ENCODE measurements at regions of chr1 and their contacts with region 1.

Region 1: DNA sequence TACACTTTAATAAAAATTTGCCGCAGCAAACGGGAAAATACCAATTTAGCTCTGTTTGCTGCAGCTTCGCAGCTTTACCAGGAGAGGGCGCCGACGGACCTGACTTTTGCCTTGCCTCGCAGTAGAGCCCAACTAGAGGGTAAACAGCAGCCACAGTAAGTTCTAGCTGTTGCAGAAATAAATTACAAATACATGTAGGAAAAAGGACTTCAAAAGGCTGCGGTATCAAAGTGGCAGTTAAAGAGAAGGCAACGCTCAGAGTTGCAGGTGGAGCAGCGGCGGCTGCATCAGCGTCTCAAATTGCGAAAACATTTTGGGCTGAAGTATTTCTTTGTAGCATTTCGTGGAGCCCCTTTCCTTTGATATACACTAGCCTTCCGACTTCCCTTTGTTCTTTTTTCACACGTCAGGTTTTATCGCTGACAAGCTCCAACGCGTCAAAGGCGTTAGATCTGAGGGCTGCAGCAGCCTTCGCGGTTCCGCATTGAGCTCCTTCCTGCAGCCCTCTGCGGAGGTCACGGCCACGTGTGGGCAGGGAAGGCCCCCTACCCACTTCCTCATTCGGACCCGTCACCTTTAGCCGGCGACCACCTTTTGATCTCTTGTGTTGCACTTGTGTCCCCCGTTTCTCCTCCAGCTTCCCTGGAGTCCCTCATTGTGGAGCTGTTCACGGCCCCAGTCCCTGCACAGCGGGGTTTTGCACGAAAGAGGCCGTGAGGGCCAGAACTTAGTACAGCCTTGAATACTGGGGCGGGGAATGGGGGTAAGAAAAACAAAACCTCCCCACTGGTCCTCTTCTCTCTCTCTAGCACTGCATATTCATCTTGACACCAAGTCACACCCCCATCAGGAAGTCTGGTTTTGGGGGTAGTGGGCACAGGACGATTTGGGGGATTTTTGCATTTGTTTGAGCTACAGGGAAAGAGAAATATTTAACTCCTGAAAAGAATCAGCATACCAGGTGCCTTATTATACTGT is 72.8 kb downstream of the S1PR1 start:
- DNase-seq: peak; percentile 80
- H3K4me3 Mint-ChIP-seq: peak overlapping the region; percentile 71
- H3K27ac Mint-ChIP-seq: peak overlapping the region; percentile 48
- H3K4me1 Mint-ChIP-seq: peaks cover 68% of the 10 kb centered on the region
- H3K27me3 Mint-ChIP-seq: no peaks in the 10 kb centered on the region

Region 2: DNA sequence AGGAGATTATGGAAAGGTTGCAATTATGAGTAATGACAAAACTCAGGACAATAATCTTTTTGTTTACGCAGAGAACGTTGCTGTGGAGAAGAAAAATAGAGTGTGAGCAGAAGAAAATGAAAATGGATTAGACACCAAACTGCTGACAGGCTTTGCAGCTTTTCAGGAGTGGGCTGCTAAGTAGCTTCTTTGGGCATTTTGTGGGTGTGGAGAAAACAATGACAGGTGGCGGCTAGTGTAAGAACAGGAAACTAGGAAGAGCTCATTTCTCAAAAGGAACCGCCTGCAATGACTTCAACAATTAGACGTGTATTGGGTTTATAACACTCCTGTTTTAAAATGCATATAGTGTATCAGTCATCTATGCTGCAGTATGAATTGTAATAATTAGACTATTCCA is 1682.0 kb before region 1 on chr1:
- CTCF ChIA-PET with region 1: no interaction called
- intact Hi-C with region 1: no loop called
- DNase-seq: no peak
- H3K4me3 Mint-ChIP-seq: no peak overlapping the region
- H3K27ac Mint-ChIP-seq: no peak overlapping the region
- H3K4me1 Mint-ChIP-seq: no peaks in the 10 kb centered on the region
- H3K27me3 Mint-ChIP-seq: no peaks in the 10 kb centered on the region

Region 3: GRCh38 chr1:100895540-100896483 is 413.8 kb before region 1 on chr1 and contains the start of gene SLC30A7:
- CTCF ChIA-PET with region 1: interaction called, 3 read pairs
- intact Hi-C with region 1: loop called (anchors 1 kb)
- DNase-seq: peak; percentile 98
- H3K4me3 Mint-ChIP-seq: peak within 1 kb of the TSS; percentile 100
- H3K27ac Mint-ChIP-seq: peak within 1 kb of the TSS; percentile 100
- H3K4me1 Mint-ChIP-seq: peaks cover 37% of the 10 kb centered on the region
- H3K27me3 Mint-ChIP-seq: no peaks in the 10 kb centered on the region
- total RNA-seq, gene SLC30A7: 32.4 to 32.6 TPM

Region 4: GRCh38 chr1:101088431-101088830 is 221.2 kb before region 1 on chr1:
- CTCF ChIA-PET with region 1: no interaction called
- intact Hi-C with region 1: no loop called
- DNase-seq: no peak
- H3K4me3 Mint-ChIP-seq: no peak overlapping the region
- H3K27ac Mint-ChIP-seq: no peak overlapping the region
- H3K4me1 Mint-ChIP-seq: peaks cover 16% of the 10 kb centered on the region
- H3K27me3 Mint-ChIP-seq: no peaks in the 10 kb centered on the region

Region 5: DNA sequence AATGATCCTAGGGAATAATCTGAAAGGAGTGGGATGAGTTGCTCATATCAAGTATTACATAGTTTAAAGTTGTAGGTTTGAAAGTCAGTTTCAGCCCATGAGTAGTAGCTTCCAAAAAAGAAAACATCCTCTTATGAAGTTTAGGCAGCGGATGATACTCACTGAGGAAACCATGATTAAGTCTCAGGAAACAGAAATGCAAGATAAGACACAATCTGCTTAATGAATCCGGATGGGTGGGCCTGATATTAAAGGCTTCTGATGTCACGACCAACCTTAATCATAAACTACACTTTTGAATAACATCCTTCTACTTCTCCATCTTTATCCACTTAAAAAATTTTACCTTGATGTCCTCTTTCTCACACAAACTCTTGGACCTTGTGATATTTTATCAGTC is 11.0 kb before region 1 on chr1:
- CTCF ChIA-PET with region 1: interaction called, 75 read pairs
- intact Hi-C with region 1: no loop called
- DNase-seq: no peak
- H3K4me3 Mint-ChIP-seq: no peak overlapping the region
- H3K27ac Mint-ChIP-seq: no peak overlapping the region
- H3K4me1 Mint-ChIP-seq: peaks cover 30% of the 10 kb centered on the region
- H3K27me3 Mint-ChIP-seq: no peaks in the 10 kb centered on the region

Region 6: DNA sequence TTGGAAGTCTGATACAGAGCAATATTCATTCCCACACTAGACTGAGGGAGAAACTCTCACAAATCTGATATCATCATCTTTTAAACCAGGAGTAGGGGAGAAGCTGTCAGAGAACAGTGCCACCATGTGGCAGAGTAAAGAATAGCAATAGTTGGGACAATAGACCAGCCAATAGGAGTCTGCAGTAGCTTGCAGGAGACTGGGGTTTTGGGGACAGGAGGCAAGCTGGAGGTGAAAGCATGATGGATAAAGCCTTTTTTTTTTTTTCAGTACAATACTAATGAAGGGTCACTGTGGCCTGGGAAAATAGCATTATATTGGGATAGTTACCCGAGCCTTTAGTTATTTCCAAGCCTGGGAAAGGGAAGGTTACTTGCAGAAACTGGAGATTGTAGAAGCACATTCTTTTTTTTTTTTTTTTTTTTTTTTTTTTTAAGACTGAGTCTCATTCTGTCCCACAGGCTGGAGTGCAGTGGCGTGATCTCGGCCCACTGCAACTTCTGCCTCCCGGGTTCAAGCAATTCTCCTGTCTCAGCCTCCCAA is 47.9 kb after region 1 on chr1:
- CTCF ChIA-PET with region 1: interaction called, 110 read pairs
- intact Hi-C with region 1: loop called (anchors 1 kb)
- DNase-seq: peak; percentile 85
- H3K4me3 Mint-ChIP-seq: no peak overlapping the region
- H3K27ac Mint-ChIP-seq: no peak overlapping the region
- H3K4me1 Mint-ChIP-seq: peaks cover 7% of the 10 kb centered on the region
- H3K27me3 Mint-ChIP-seq: no peaks in the 10 kb centered on the region

Region 7: GRCh38 chr1:101438359-101438758 is 128.7 kb after region 1 on chr1:
- CTCF ChIA-PET with region 1: interaction called, 14 read pairs
- intact Hi-C with region 1: loop called (anchors 1 kb)
- DNase-seq: peak; percentile 20
- H3K4me3 Mint-ChIP-seq: no peak overlapping the region
- H3K27ac Mint-ChIP-seq: no peak overlapping the region
- H3K4me1 Mint-ChIP-seq: no peaks in the 10 kb centered on the region
- H3K27me3 Mint-ChIP-seq: no peaks in the 10 kb centered on the region

Region 8: GRCh38 chr1:101506541-101507164 is 197.0 kb after region 1 on chr1:
- CTCF ChIA-PET with region 1: interaction called, 10 read pairs
- intact Hi-C with region 1: loop called (anchors 5 kb)
- DNase-seq: peak; percentile 60
- H3K4me3 Mint-ChIP-seq: no peak overlapping the region
- H3K27ac Mint-ChIP-seq: no peak overlapping the region
- H3K4me1 Mint-ChIP-seq: no peaks in the 10 kb centered on the region
- H3K27me3 Mint-ChIP-seq: no peaks in the 10 kb centered on the region

Region 9: DNA sequence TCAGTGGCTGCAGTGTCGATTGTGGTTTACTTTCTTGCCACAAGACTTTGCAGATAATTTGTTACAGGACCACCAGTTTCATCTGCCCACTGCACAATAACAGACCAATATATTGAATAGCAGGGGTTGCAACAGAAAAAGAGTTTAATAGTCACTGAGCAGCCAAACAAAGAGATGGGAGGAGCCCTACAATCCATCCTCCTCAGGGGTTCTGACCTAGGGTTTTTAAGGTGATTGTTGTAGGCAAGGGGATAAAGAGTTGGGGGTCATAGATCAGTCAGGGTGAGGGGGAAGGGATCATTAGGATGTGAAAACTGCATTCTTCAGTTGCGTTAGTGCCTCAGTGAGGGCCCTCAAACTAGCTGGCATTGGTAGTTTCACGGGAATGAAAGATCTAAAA is 797.8 kb after region 1 on chr1:
- CTCF ChIA-PET with region 1: no interaction called
- intact Hi-C with region 1: no loop called
- DNase-seq: no peak
- H3K4me3 Mint-ChIP-seq: no peak overlapping the region
- H3K27ac Mint-ChIP-seq: no peak overlapping the region
- H3K4me1 Mint-ChIP-seq: no peaks in the 10 kb centered on the region
- H3K27me3 Mint-ChIP-seq: no peaks in the 10 kb centered on the region